ENCODE measurements at regions of chr14 and their contacts with region 1.

Region 1: DNA sequence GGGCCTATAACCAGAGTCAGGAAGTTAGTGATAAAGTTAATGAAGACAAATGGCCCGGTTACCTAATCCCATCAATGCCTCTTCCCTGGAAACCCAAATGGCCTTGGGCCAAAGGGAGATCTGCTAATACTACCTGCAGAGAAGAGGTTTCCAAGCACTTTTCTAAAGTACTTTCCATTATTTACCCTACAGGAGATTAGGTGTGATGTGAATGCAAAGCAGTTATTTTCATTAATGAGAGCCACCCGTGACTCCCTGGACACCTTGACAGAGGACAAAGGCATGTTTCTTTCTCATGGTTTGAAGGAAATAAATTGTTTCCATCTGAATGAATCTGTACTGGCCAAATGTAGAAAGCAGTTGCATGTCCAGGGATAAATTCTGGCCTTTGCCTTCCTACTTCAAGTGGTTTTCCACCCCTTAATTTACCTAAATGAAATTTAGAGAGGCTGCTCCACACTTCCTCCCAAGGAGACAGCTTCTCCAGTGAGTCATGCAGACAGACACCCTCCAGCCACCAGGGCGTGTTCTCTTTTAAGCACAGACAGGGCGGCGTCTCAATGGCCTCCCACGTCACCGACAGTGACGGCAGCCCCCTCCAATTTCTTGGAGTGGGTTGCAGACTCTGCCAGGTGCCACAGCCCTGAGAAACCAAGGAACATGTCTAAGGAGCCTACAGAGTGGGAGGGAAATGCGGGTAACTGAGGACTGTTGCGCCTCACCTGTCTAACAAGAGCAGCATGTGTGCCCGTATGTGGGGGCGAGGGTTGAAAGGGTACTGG is 43.9 kb upstream of the GNPNAT1 start:
- DNase-seq: peak in 1 of 2 experiments; percentile 60
- H3K4me3 ChIP-seq: no peak overlapping the region
- H3K27ac ChIP-seq: no peak overlapping the region
- H3K4me1 ChIP-seq: 0 out of 2 replicates have a peak, but pooled peaks cover 7% of the 10 kb centered on the region
- H3K27me3 ChIP-seq: no peaks in the 10 kb centered on the region
- CTCF ChIP-seq: no peak

Region 2: DNA sequence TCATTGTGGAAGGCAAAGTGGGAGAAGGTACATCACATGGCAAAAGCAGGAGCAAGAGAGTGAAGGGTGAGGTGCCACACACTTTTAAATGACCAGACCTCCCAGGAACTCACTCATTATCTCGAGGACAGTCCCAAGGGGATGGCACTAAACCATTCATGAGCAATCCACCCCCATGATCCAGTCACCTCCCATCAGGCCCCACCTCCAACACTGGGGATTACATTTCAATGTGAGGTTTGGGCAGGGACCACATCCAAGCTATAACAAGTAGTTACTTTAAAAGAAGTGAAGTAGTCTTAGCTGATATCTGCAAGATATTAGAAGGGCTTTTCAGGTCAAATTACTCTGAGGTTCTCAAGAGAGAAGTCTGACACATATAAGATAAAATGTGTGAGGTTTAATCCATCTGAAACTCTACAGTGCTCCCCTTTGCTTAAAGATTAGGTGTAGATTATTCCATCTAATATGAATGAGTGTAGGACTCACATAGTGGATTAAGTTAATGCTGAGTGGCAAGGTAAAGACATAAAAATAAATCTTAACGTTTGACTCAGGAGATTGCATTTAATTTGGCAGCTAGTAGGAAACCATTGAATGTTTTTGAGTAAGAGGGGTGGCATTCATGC is 1464.4 kb before region 1 on chr14:
- CTCF ChIA-PET with region 1: no interaction called
- POLR2A ChIA-PET with region 1: interaction called, 16 read pairs
- intact Hi-C with region 1: no loop called
- DNase-seq: no peak
- H3K4me3 ChIP-seq: no peak overlapping the region
- H3K27ac ChIP-seq: no peak overlapping the region
- H3K4me1 ChIP-seq: no peaks in the 10 kb centered on the region
- H3K27me3 ChIP-seq: no peaks in the 10 kb centered on the region
- CTCF ChIP-seq: no peak

Region 3: GRCh38 chr14:52801015-52801712 is 34.1 kb before region 1 on chr14:
- CTCF ChIA-PET with region 1: no interaction called
- POLR2A ChIA-PET with region 1: no interaction called
- intact Hi-C with region 1: no loop called
- DNase-seq: no peak
- H3K4me3 ChIP-seq: no peak overlapping the region
- H3K27ac ChIP-seq: no peak overlapping the region
- H3K4me1 ChIP-seq: no peaks in the 10 kb centered on the region
- H3K27me3 ChIP-seq: no peaks in the 10 kb centered on the region
- CTCF ChIP-seq: no peak

Region 4: GRCh38 chr14:52868911-52869618 is 33.8 kb after region 1 on chr14:
- CTCF ChIA-PET with region 1: no interaction called
- POLR2A ChIA-PET with region 1: no interaction called
- intact Hi-C with region 1: no loop called
- DNase-seq: no peak
- H3K4me3 ChIP-seq: no peak overlapping the region
- H3K27ac ChIP-seq: no peak overlapping the region
- H3K4me1 ChIP-seq: peaks cover 8% of the 10 kb centered on the region; the same call in 1 of the 2 replicates
- H3K27me3 ChIP-seq: no peaks in the 10 kb centered on the region
- CTCF ChIP-seq: no peak

Measured in PC-9 (cell line).